HepG2 (cell line): ENCODE measurements at regions of chr1 and their contacts with region 1.

Region 1: GRCh38 chr1:197868751-197869489 is 33.5 kb upstream of the C1orf53 start:
- DNase-seq: peak; percentile 50
- ATAC-seq: peak; percentile 96
- H3K4me3 ChIP-seq: no peak overlapping the region
- H3K27ac ChIP-seq: no peak overlapping the region
- H3K4me1 ChIP-seq: no peaks in the 10 kb centered on the region
- H3K27me3 ChIP-seq: no peaks in the 10 kb centered on the region
- CTCF ChIP-seq: peak; percentile 80
- EP300 ChIP-seq: no peak
- POLR2A ChIP-seq: no peak
- RAD21 ChIP-seq: peak; percentile 80

Region 2: GRCh38 chr1:197526736-197527371 is 342.1 kb before region 1 on chr1:
- CTCF ChIA-PET with region 1: interaction called, 5 read pairs
- POLR2A ChIA-PET with region 1: no interaction called
- in situ Hi-C with region 1: no loop called
- intact Hi-C with region 1: loop called (anchors 1 kb)
- DNase-seq: peak; percentile 21
- ATAC-seq: no peak
- H3K4me3 ChIP-seq: no peak overlapping the region
- H3K27ac ChIP-seq: no peak overlapping the region
- H3K4me1 ChIP-seq: no peaks in the 10 kb centered on the region
- H3K27me3 ChIP-seq: no peaks in the 10 kb centered on the region
- CTCF ChIP-seq: no peak; the same call in 1 of the 2 replicates
- EP300 ChIP-seq: no peak
- POLR2A ChIP-seq: no peak
- RAD21 ChIP-seq: no peak

Region 3: GRCh38 chr1:197692965-197693364 is 176.0 kb before region 1 on chr1:
- CTCF ChIA-PET with region 1: interaction called, 3 read pairs
- POLR2A ChIA-PET with region 1: no interaction called
- in situ Hi-C with region 1: no loop called
- intact Hi-C with region 1: loop called (anchors 1 kb)
- DNase-seq: peak; percentile 15
- ATAC-seq: peak; percentile 61
- H3K4me3 ChIP-seq: no peak overlapping the region
- H3K27ac ChIP-seq: no peak overlapping the region
- H3K4me1 ChIP-seq: peaks cover 16% of the 10 kb centered on the region
- H3K27me3 ChIP-seq: no peaks in the 10 kb centered on the region
- CTCF ChIP-seq: peak; percentile 58
- EP300 ChIP-seq: no peak
- POLR2A ChIP-seq: no peak
- RAD21 ChIP-seq: no peak

Region 4: GRCh38 chr1:197775282-197776262 is 93.3 kb before region 1 on chr1 and contains the start of gene DENND1B:
- CTCF ChIA-PET with region 1: no interaction called
- POLR2A ChIA-PET with region 1: no interaction called
- in situ Hi-C with region 1: no loop called
- intact Hi-C with region 1: loop called (anchors 10 kb)
- DNase-seq: peak; percentile 52
- ATAC-seq: peak; percentile 92
- H3K4me3 ChIP-seq: peak within 1 kb of the TSS; percentile 65 to 93 (median 66)
- H3K27ac ChIP-seq: peak within 1 kb of the TSS; percentile 72
- H3K4me1 ChIP-seq: peaks cover 23% of the 10 kb centered on the region
- H3K27me3 ChIP-seq: no peaks in the 10 kb centered on the region
- CTCF ChIP-seq: peak; percentile 40; the same call in 1 of the 2 replicates
- EP300 ChIP-seq: no peak
- POLR2A ChIP-seq: peak; percentile 40 to 57; a peak in 2 of 4 replicates
- RAD21 ChIP-seq: no peak; the same call in 1 of the 2 replicates
- total RNA-seq, gene DENND1B: 5.7 and 7.5 TPM in 2 replicates

Region 5: DNA sequence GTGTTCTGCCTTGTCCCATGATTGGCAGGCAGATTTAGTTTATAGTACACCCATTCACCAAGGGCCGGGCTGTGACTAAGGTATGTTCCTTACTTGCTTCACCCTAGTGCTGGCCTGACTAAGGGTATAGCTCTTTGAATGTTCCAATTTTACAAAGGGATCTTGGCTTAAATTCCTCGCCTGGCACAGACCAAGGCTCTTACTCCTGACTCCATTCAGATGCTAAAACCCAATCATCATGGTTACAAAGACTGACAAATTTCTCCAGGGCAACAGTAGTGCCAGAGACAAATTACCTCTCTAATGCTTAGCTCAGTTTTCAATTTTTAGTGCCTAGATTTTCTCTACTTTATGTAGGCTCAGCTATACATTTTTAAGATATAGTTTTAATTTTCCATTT is 22.0 kb after region 1 on chr1:
- CTCF ChIA-PET with region 1: no interaction called
- POLR2A ChIA-PET with region 1: no interaction called
- in situ Hi-C with region 1: no loop called
- intact Hi-C with region 1: no loop called
- DNase-seq: no peak
- ATAC-seq: no peak
- H3K4me3 ChIP-seq: no peak overlapping the region
- H3K27ac ChIP-seq: no peak overlapping the region
- H3K4me1 ChIP-seq: peaks cover 13% of the 10 kb centered on the region
- H3K27me3 ChIP-seq: no peaks in the 10 kb centered on the region
- CTCF ChIP-seq: no peak
- EP300 ChIP-seq: no peak
- POLR2A ChIP-seq: no peak
- RAD21 ChIP-seq: no peak

Region 6: DNA sequence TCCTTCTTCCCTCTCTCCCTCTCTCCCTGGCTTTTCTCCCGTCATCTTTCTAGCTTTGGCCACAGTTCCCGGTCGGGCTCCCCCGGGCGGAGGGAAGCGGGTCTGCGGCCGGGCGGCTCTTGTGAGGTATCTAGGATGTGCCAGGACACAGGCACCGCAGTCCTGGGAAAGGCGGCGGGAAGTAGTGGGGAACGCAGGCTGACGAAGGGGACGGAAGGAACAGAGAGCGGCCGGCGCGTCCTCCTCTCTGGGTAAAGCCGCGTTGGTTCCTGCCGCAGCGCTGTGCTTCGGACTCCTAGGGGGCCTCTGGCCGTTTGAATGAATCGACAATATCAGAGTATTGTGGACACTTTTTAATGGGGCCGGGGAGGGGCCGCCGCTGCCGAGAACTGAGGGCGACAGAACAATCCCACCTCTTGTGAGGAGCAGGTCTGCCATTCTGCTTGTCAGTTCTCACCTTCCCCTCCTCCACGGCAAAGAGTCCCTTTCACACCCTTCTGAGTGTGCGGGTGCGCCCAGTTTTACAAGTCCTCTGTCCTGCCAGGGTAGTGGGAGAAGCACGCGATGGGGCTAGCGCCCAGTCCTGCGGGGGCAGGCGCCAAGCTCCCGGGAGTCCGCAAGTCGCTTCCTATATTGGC is 47.1 kb after region 1 on chr1:
- CTCF ChIA-PET with region 1: no interaction called
- POLR2A ChIA-PET with region 1: no interaction called
- in situ Hi-C with region 1: no loop called
- intact Hi-C with region 1: loop called (anchors 1 kb)
- DNase-seq: peak; percentile 67
- ATAC-seq: peak; percentile 92
- H3K4me3 ChIP-seq: peak overlapping the region; percentile 30 to 68 (median 50)
- H3K27ac ChIP-seq: no peak overlapping the region
- H3K4me1 ChIP-seq: peaks cover 57% of the 10 kb centered on the region
- H3K27me3 ChIP-seq: peaks cover 20 to 91% of the 10 kb centered on the region in 2 experiments
- CTCF ChIP-seq: peak; percentile 69
- EP300 ChIP-seq: no peak
- POLR2A ChIP-seq: no peak
- RAD21 ChIP-seq: peak; percentile 63